CD8-positive, alpha-beta T cell (primary cell): ENCODE measurements at regions of chr22 and their contacts with region 1.

Region 1: DNA sequence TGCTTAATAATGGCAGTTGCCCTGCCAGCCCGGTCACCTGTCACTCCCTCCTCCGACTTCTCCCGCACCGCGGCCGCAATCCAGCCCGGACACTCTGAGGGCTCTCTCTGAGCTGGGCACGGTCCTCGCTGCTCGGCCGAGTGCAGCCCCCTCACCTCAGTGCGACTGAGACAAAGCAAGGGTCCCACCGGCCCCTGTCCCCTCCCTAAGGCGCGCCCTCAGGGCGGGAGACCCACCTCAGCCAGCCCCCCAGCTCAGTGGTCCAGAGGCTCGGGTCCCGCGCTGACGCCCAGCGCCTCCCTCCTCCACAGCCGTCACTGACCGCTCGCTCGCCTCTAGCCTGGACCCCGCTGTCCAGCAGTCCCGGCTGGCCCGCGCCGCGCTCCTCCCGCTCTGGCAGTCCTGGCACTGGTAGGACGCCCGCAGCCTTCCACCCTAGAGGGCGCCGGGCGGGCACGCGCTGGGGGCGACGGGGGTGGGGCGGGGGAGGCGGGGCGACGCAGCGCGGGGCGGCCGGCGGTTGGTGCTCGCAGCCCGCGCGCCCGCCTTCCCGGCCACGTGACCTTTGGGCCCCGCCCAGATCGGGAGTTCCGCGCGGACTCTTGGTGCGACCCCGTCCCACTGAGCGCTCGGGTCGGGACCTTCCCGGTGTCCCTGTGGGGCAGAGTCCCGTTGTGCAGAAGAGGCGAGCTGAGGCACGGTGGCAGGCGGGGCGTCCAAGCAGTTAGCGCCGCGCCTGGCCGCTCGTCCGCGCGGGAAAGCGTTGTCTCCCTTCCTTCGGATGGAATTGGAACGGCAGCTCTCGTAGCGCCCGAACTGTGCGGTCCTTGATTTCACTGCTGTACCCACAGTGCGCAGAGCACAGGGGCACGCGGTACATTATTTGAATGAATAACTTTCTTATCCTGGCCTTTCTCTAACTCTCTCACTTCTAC is 7.8 kb upstream of the L3MBTL2 start:
- DNase-seq: peak; percentile 52 to 91 (median 82)
- ATAC-seq: peak; percentile 92
- H3K4me3 ChIP-seq: peak overlapping the region; percentile 91 to 94
- H3K4me3 Mint-ChIP-seq: peak overlapping the region; percentile 91
- H3K27ac ChIP-seq: no peak overlapping the region
- H3K27ac Mint-ChIP-seq: no peak overlapping the region
- H3K4me1 ChIP-seq: peaks cover 16% of the 10 kb centered on the region
- H3K4me1 Mint-ChIP-seq: peaks cover 14% of the 10 kb centered on the region
- H3K27me3 ChIP-seq: peaks cover 0 to 3% of the 10 kb centered on the region in 2 experiments
- H3K27me3 Mint-ChIP-seq: no peaks in the 10 kb centered on the region
- CTCF ChIP-seq: no peak

Region 2: GRCh38 chr22:41237707-41238569 is 40.6 kb after region 1 on chr22:
- CTCF ChIA-PET with region 1: interaction called, 3 read pairs
- POLR2A ChIA-PET with region 1: interaction called, 5 read pairs
- intact Hi-C with region 1: loop called (anchors 2 to 5 kb)
- DNase-seq: peak; percentile 67 to 91 (median 83)
- ATAC-seq: peak; percentile 92
- H3K4me3 ChIP-seq: peak overlapping the region; percentile 39 to 65
- H3K4me3 Mint-ChIP-seq: peak overlapping the region; percentile 76
- H3K27ac ChIP-seq: no peak overlapping the region
- H3K27ac Mint-ChIP-seq: no peak overlapping the region
- H3K4me1 ChIP-seq: peaks cover 7% of the 10 kb centered on the region
- H3K4me1 Mint-ChIP-seq: peaks cover 11% of the 10 kb centered on the region
- H3K27me3 ChIP-seq: no peaks in the 10 kb centered on the region
- H3K27me3 Mint-ChIP-seq: no peaks in the 10 kb centered on the region
- CTCF ChIP-seq: peak; percentile 67

Region 3: GRCh38 chr22:41301105-41302020 is 104.1 kb after region 1 on chr22 and contains the start of gene ZC3H7B:
- CTCF ChIA-PET with region 1: no interaction called
- POLR2A ChIA-PET with region 1: no interaction called
- intact Hi-C with region 1: loop called in 1 of 2 experiments (anchors 5 kb)
- DNase-seq: peak; percentile 64 to 94 (median 81)
- ATAC-seq: peak; percentile 93
- H3K4me3 ChIP-seq: peak within 1 kb of the TSS; percentile 81 to 96
- H3K4me3 Mint-ChIP-seq: peak within 1 kb of the TSS; percentile 83
- H3K27ac ChIP-seq: peak within 1 kb of the TSS; percentile 72 to 80
- H3K27ac Mint-ChIP-seq: peak within 1 kb of the TSS; percentile 95
- H3K4me1 ChIP-seq: peaks cover 16% of the 10 kb centered on the region
- H3K4me1 Mint-ChIP-seq: peaks cover 29% of the 10 kb centered on the region
- H3K27me3 ChIP-seq: no peaks in the 10 kb centered on the region
- H3K27me3 Mint-ChIP-seq: no peaks in the 10 kb centered on the region
- CTCF ChIP-seq: peak; percentile 43
- total RNA-seq, gene ZC3H7B: 30.7 to 30.8 TPM